ENCODE measurements at regions of chr11 and their contacts with region 1.

Region 1: DNA sequence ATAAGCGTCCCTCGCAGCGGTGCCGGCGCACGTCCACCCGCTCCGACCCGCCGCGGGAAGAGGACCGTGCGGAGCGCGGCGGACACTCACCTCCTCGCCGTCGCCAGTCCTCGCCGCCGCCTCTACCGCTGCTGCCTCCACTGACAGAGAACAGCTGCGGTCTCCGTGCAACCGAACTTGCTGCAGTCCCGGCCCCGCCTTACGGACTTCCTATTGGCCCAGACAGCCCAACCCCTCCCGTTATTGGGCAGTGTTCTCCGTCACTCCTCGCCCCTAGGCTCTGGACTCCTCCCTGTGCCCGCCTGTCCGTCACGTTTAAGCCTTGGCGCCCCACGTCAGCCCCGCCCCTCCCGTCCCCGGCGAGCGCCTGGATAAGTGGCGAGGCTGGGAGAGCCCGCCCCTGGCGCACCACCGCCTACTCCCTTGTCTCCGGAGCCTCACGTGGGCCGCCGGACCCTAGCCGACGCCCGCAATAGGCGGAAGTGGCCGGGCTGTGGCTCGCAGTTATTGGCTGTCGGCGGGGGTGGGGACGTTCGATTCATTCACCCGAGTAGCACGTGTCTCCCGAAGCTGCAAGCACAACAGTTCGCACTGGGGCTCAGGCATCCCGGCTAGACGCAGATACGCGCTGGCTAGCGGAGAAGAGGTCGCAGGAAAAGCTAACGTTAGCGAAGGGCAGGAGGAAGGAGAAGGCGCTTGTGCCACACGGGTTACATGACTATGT is at the start of gene PC:
- DNase-seq: peak; percentile 100
- ATAC-seq: peak; percentile 96
- H3K4me3 ChIP-seq: peak within 1 kb of the TSS; percentile 73
- H3K27ac ChIP-seq: peak within 1 kb of the TSS; percentile 68
- H3K4me1 ChIP-seq: peaks cover 16% of the 10 kb centered on the region
- H3K27me3 ChIP-seq: no peaks in the 10 kb centered on the region
- CTCF ChIP-seq: no peak
- POLR2A ChIP-seq: peak; percentile 92
- RAD21 ChIP-seq: peak; percentile 24
- total RNA-seq, gene PC: 9.7 and 13.6 TPM in 2 replicates

Region 2: DNA sequence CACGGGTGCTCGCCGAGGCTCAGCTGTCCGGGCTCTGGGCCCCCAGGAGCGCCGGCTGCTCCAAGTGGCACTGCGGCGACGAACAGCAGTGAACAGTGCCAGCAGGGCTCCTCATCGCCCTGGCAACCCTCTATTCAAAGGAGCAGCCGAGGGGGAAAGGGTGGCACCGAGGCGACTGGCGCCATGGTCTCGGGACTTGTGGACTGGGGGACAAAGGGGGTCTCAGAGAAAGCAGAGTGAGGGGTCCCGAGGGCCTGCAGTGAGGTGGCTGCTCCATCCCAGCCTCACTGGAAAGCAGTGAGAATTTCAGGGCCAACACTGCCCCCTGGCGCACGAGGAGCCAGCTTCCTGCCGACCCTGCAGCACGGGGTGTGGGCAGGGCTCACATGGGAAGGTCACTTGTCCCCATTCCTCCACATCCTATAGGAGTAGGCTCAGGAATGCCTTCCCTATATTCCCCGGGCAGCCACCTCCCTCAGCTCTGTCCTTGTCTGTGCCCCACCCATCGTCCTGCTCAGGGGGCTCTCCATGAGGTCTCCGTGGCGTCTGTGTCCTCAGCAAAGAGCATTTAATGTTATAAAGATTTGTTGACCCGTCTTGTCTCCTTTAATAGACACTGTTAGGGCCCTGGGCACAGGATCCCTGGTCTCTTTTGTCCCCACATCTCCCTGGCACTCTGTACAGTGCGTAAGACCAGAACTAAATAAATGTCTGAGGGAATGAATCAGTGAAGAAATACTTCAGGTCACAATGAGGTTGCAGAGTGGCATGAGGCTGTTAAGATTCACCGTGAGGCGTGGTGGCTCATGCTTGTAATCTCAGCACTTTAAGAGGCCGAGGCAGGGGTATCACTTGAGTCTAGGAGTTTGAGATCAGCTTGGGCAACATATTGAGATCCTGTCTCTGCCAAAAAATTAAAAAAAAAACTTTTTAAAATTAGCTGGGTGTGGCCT is 75.1 kb before region 1 on chr11:
- CTCF ChIA-PET with region 1: no interaction called
- POLR2A ChIA-PET with region 1: no interaction called
- dilution Hi-C with region 1: no loop called
- in situ Hi-C with region 1: no loop called
- intact Hi-C with region 1: loop called (anchors 5 kb)
- DNase-seq: peak; percentile 86
- ATAC-seq: peak; percentile 82
- H3K4me3 ChIP-seq: no peak overlapping the region
- H3K27ac ChIP-seq: peak overlapping the region; percentile 47
- H3K4me1 ChIP-seq: peaks cover 44% of the 10 kb centered on the region
- H3K27me3 ChIP-seq: no peaks in the 10 kb centered on the region
- CTCF ChIP-seq: peak; percentile 51
- POLR2A ChIP-seq: no peak
- RAD21 ChIP-seq: peak; percentile 52

Measured in IMR-90 (cell line).